ENCODE measurements at regions of chr1 and their contacts with region 1.

Region 1: DNA sequence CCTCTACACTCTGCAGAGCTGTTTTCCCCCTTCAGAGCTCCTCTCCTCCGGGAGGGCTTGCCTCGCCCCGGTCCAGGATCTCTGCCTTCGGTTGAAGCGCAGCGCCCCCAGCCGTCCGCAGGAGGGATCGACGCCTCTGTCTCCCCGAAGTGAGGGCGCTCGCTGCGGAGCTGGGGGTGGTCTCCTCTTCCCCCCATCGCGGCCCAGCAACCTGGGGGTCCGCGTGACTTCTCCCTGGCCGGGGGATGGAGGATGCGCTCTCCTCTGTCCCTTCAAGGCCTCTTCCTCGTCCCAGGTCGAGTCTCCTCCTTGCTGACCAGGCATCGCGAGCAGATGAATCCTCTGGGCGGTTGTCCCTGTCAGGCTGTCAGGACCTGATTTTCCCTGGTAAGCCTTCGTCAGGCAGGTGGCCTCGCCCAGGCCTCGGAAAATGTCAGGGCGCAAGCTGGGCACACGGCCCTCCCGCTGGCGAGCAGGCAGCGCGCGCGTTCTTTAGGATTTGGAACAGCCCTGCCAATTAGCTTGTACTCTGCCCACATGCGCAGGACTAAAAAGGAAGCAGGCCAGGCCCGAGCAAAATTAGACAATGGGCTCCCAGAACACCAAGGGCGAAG is 90.5 kb downstream of the EDEM3 start:
- DNase-seq: peak; percentile 71 to 86 (median 80)
- H3K4me3 ChIP-seq: peak overlapping the region; percentile 6 to 70 (median 57)
- H3K27ac ChIP-seq: peak overlapping the region in 57 of 59 donors; percentile 23 to 91 (median 82)
- H3K27me3 ChIP-seq: no peaks in the 10 kb centered on the region
- CTCF ChIP-seq: peak; percentile 62 to 97 (median 91)

Region 2: DNA sequence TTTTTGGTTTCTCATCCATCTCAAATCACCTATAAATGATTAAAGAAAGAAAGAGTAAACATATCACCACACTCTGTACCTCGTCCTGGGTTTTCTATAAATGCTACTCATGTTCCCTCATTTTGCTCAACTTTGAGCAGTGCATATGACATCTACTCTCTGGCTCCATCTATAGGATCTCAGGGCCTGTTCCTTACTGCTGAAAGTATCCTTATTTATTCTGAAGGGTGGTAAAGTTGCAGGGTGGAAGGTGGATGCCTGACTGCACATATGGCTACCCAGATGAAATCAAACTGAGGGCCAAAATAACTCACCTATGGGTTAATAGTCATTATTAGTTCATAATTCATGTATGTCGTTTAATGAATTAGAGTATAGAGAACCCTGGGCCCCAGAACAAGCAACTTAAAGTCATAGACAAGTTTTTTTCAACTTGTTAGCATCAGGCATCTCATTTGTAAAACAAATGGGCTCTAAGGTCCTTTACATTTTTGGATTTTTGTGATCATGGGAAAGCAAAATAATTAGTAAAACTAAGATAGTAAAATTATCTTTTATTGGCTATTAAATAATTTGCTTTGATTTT is 1120.4 kb before region 1 on chr1:
- intact Hi-C with region 1: no loop called
- DNase-seq: peak in 1 of 10 donors; percentile 10
- H3K4me3 ChIP-seq: peak overlapping the region in 1 of 59 donors; percentile 6
- H3K27ac ChIP-seq: peak overlapping the region in 13 of 59 donors; percentile 1 to 59 (median 25)
- H3K27me3 ChIP-seq: no peaks in the 10 kb centered on the region
- CTCF ChIP-seq: peak; percentile 47 to 79 (median 66)

Region 3: DNA sequence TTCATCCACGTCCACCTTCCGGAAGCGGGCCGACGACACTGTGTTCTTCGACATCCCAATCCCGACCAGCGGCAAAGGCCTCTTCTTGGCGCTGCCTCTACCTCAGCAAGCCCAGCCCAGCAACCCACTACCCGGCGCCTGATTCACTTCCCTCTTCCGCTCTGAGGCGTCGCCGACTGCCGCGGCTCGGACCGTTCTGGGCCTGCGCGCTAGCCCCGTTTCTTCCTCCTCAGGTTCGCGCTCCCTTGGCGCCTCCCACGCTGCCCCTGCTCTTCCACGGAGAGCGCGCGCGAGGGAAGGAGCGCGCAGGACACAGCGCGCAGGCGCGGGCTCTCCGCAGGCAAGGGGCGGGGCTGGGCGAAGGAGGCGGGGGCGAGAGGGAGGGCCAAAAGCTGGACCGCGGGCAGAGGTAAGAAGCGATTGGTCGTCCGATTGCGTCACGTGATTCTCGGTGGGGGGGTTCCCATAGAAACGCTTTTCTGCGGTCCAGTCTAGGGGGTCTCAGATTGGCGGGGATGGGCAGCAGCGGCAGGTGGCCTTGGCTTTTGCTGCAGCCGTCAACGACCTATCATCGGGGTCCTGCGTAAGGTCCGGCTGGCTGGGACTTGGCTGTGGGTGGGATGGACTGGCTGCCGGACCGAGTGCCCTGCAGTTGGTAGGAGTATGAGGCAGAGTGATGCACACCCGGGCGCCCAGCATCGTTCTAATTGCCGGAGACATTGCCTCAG is 1028.4 kb before region 1 on chr1 and contains the start of gene ARPC5:
- intact Hi-C with region 1: loop called in 1 of 2 experiments (anchors 10 kb)
- DNase-seq: peak; percentile 94 to 99 (median 97)
- H3K4me3 ChIP-seq: peak within 1 kb of the TSS; percentile 70 to 99 (median 88)
- H3K27ac ChIP-seq: peak within 1 kb of the TSS; percentile 69 to 99 (median 94)
- H3K27me3 ChIP-seq: no peaks in the 10 kb centered on the region
- CTCF ChIP-seq: peak in 35 of 56 donors; percentile 4 to 60 (median 24)
- total RNA-seq, gene ARPC5: 31.6 to 78.5 (median 50.0) TPM

Region 4: DNA sequence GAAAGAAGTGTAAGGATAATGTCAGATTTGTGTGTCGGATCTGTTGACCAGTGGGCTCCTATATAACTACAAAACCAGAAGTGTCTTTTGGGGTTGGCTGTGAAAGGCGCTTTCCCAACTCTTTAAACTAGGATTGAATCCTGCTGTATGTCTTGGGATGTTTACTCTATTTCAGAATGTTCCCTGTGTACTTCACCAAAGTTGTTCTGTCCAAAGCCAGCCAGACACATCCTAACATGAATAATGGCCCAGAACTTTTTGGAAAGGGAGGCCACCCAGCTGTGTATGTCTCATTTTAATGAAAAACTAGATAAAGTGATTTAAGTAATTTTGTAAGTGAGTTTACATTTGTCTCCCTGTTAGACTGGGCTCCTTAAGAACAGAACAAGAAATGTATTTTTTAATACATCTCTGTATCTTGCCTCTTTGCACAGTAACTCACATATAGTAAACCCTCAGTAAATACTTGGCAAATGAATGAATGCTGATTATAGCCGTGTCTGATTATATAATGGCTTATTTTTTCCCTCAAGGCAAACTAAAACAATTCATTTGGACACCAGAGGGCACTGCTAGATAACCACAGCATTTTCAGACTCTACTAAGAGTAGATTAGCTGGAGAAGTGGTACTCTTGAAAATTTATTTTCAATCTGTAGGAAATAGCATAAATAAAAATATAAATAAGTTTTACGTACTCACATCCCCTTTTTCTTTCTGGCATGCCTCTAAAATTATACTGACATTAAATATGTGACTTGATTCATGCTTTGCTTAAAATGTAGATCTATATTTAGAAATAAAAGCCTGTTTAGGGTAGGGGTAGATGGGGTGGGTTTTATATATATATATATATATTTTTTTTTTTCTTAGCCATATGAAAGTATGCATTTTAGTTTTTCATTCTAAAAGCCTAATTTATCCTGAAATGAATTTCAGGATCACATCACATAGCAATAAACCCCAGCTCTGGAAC is 588.8 kb before region 1 on chr1:
- intact Hi-C with region 1: loop called in 1 of 2 experiments (anchors 10 kb)
- DNase-seq: peak in 3 of 10 donors; percentile 10 to 53 (median 36)
- H3K4me3 ChIP-seq: no peak overlapping the region
- H3K27ac ChIP-seq: peak overlapping the region in 55 of 59 donors; percentile 21 to 86 (median 69)
- H3K27me3 ChIP-seq: no peaks in the 10 kb centered on the region
- CTCF ChIP-seq: peak; percentile 69 to 98 (median 84)

Region 5: GRCh38 chr1:184222652-184223052 is 441.5 kb before region 1 on chr1:
- intact Hi-C with region 1: loop called in 1 of 2 experiments (anchors 10 kb)
- DNase-seq: peak in 8 of 10 donors; percentile 21 to 70 (median 44)
- H3K4me3 ChIP-seq: peak overlapping the region in 49 of 59 donors; percentile 5 to 58 (median 37)
- H3K27ac ChIP-seq: peak overlapping the region in 4 of 59 donors; percentile 1 to 57 (median 33)
- H3K27me3 ChIP-seq: no peaks in the 10 kb centered on the region
- CTCF ChIP-seq: peak; percentile 78 to 96 (median 90)

Region 6: DNA sequence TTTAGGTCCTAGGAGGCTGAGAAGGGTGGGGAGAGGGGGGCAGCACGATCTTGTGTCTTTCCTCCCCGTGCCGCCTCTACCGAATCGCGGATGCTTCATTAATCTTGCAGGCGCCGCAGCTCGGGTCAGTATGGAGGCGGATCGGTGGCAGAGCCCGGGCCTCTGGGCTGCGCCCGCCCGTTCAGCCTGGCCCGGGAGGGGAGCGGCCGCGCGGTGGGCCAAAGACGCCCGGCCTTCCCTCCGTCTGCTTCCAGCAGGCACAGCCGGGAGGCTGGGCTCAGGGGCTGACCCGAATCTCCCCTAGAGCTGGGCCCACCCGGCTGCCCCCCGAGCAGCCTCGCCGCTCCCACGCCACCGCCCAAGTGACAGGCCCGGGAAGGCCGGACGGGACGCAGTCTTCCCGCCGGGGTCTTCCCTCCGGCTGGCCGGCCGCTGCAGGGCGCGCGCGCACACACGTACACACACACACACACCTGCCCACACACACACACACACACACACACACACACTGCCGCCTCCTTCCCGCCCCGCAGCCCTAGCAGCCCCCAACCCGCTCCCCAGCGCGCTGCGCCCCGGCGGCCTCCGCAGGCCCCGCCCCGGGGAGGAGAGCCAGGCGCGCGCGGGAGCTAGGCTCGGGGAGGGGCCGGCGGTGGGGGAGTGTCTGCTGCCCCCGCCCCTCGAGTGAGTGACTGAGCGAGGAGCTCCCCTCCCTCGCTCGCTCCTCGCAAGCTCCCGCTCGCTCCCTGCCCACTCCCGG is 277.7 kb before region 1 on chr1 and contains the start of gene C1orf21:
- intact Hi-C with region 1: loop called in 1 of 2 experiments (anchors 5 kb)
- DNase-seq: peak; percentile 54 to 92 (median 86)
- H3K4me3 ChIP-seq: peak within 1 kb of the TSS; percentile 51 to 86 (median 76)
- H3K27ac ChIP-seq: peak within 1 kb of the TSS in 58 of 59 donors; percentile 12 to 94 (median 82)
- H3K27me3 ChIP-seq: no peaks in the 10 kb centered on the region
- CTCF ChIP-seq: peak in 1 of 56 donors; percentile 6
- total RNA-seq, gene C1orf21: 22.5 to 94.0 (median 64.7) TPM

Region 7: GRCh38 chr1:184574588-184574987 is 89.6 kb before region 1 on chr1:
- intact Hi-C with region 1: loop called in 1 of 2 experiments (anchors 10 kb)
- DNase-seq: no peak
- H3K4me3 ChIP-seq: no peak overlapping the region
- H3K27ac ChIP-seq: peak overlapping the region in 32 of 59 donors; percentile 1 to 71 (median 40)
- H3K27me3 ChIP-seq: no peaks in the 10 kb centered on the region
- CTCF ChIP-seq: no peak

Region 8: DNA sequence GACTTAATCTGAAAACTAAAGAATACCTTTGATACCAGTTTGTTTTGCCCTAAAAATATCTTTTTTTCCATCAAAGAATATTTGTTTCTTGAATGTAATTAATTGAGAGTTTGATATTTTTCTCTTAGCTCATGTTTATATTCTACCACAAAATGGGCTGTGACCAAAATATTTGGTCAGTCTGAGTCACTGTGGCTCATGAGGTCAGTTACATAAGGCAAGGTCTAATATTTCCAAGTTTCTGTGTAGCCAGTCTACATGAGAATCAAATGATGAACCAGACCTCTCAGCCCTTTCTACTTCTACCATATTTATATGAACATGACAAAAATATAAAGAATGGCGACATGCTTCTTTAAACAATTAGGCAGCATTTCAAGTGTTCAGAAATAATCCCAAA is 735.9 kb after region 1 on chr1:
- intact Hi-C with region 1: no loop called
- DNase-seq: no peak
- H3K4me3 ChIP-seq: no peak overlapping the region
- H3K27ac ChIP-seq: no peak overlapping the region
- H3K27me3 ChIP-seq: no peaks in the 10 kb centered on the region
- CTCF ChIP-seq: no peak